ENCODE measurements at regions of chr6 and their contacts with region 1.

Region 1: GRCh38 chr6:139375232-139376016 is 976 bp upstream of the CITED2 start:
- DNase-seq: peak; percentile 83
- ATAC-seq: peak; percentile 69
- H3K4me3 ChIP-seq: peak overlapping the region; percentile 88 to 97
- H3K27ac ChIP-seq: peak overlapping the region; percentile 99
- H3K4me1 ChIP-seq: peaks cover 28% of the 10 kb centered on the region
- H3K27me3 ChIP-seq: no peaks in the 10 kb centered on the region
- CTCF ChIP-seq: no peak; the same call in 1 of the 2 replicates

Region 2: GRCh38 chr6:139355172-139355571 is 20.3 kb before region 1 on chr6:
- CTCF ChIA-PET with region 1: no interaction called
- POLR2A ChIA-PET with region 1: no interaction called
- in situ Hi-C with region 1: no loop called
- intact Hi-C with region 1: no loop called
- DNase-seq: no peak
- ATAC-seq: no peak
- H3K4me3 ChIP-seq: no peak overlapping the region
- H3K27ac ChIP-seq: no peak overlapping the region
- H3K4me1 ChIP-seq: no peaks in the 10 kb centered on the region
- H3K27me3 ChIP-seq: no peaks in the 10 kb centered on the region
- CTCF ChIP-seq: no peak

Region 3: GRCh38 chr6:139568956-139569548 is 193.6 kb after region 1 on chr6:
- CTCF ChIA-PET with region 1: no interaction called
- POLR2A ChIA-PET with region 1: interaction called, 3 read pairs
- in situ Hi-C with region 1: no loop called
- intact Hi-C with region 1: loop called (anchors 10 kb)
- DNase-seq: peak; percentile 27
- ATAC-seq: peak; percentile 78
- H3K4me3 ChIP-seq: no peak overlapping the region
- H3K27ac ChIP-seq: peak overlapping the region; percentile 86
- H3K4me1 ChIP-seq: peaks cover 37% of the 10 kb centered on the region
- H3K27me3 ChIP-seq: no peaks in the 10 kb centered on the region
- CTCF ChIP-seq: no peak

Region 4: GRCh38 chr6:139708337-139709199 is 333.1 kb after region 1 on chr6:
- CTCF ChIA-PET with region 1: no interaction called
- POLR2A ChIA-PET with region 1: interaction called, 16 read pairs
- in situ Hi-C with region 1: no loop called
- intact Hi-C with region 1: loop called (anchors 10 kb)
- DNase-seq: peak; percentile 43
- ATAC-seq: peak; percentile 98
- H3K4me3 ChIP-seq: peak overlapping the region in 1 of 2 experiments; percentile 14; a peak in 1 of 4 replicates
- H3K27ac ChIP-seq: peak overlapping the region; percentile 99
- H3K4me1 ChIP-seq: peaks cover 23% of the 10 kb centered on the region
- H3K27me3 ChIP-seq: no peaks in the 10 kb centered on the region
- CTCF ChIP-seq: no peak

Region 5: DNA sequence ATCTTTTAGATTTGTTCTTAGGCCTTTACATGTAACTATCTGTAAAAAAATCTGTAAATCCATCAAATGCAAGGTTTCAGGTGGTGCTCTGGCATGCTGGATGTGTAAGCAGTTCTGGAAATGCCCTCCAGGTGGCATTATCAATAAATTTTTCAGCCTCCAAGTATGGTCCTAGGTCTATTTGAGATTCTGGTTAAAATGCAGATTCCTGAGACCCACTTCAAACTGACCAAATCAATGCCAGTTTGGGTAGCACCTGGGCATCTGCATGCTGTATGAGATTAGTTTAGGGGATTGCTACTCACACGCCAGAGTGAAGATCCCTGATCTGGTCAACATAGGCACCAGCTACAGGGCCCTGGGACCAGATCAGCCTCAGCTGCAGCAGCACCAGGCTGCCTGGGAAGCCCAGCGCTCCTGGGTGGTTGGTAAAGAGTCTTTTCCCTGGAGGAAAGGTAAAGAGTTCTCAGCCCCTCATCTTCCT is 506.3 kb after region 1 on chr6:
- CTCF ChIA-PET with region 1: interaction called, 5 read pairs
- POLR2A ChIA-PET with region 1: interaction called, 4 read pairs
- in situ Hi-C with region 1: no loop called
- intact Hi-C with region 1: loop called (anchors 5 kb)
- DNase-seq: peak; percentile 79
- ATAC-seq: peak; percentile 92
- H3K4me3 ChIP-seq: peak overlapping the region; percentile 10 to 50
- H3K27ac ChIP-seq: peak overlapping the region; percentile 89
- H3K4me1 ChIP-seq: peaks cover 32% of the 10 kb centered on the region
- H3K27me3 ChIP-seq: no peaks in the 10 kb centered on the region
- CTCF ChIP-seq: peak; percentile 79